Right cardiac atrium (tissue), 5 donors: ENCODE measurements at regions of chr6 and their contacts with region 1.

Region 1: DNA sequence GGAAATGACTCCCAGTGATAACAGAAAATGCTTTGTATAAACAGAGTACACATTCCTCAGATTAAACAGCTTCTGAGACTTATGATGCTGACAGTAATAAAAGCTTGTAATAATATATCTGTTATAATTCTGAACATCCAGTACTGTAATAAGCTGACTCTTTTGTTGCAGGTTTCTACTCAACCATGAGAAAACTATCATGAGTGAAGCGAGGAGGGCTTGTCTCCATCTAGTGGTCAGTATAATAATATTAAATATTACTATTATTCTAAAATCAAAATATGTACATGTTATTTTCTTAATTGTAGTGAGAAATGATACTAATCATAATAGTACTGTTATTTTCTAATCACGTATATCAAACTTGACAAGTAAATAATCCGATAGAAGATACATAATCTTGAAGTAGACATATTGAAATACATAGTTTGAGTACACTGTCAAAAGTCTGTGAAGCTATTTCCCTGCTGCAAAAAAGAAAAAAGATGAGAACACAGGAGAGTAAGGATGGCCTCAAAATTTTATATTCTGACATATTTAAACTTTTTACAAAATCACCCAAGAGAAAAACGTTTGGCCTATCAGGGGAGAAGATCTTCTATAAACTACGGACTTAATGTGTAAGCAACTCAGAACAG is 183.1 kb downstream of the MOXD1 start:
- DNase-seq: no peak
- ATAC-seq: peak; percentile 59 to 80
- H3K4me3 ChIP-seq: no peak overlapping the region
- H3K27ac ChIP-seq: no peak overlapping the region
- H3K4me1 ChIP-seq: no peaks in the 10 kb centered on the region
- H3K27me3 ChIP-seq: no peaks in the 10 kb centered on the region

Region 2: GRCh38 chr6:131914967-131915751 is 303.0 kb before region 1 on chr6:
- intact Hi-C with region 1: loop called (anchors 5 to 10 kb)
- DNase-seq: peak in 2 of 3 donors; percentile 54 to 75
- ATAC-seq: peak; percentile 66 to 76
- H3K4me3 ChIP-seq: no peak overlapping the region
- H3K27ac ChIP-seq: no peak overlapping the region
- H3K4me1 ChIP-seq: no peaks in the 10 kb centered on the region
- H3K27me3 ChIP-seq: no peaks in the 10 kb centered on the region

Region 3: DNA sequence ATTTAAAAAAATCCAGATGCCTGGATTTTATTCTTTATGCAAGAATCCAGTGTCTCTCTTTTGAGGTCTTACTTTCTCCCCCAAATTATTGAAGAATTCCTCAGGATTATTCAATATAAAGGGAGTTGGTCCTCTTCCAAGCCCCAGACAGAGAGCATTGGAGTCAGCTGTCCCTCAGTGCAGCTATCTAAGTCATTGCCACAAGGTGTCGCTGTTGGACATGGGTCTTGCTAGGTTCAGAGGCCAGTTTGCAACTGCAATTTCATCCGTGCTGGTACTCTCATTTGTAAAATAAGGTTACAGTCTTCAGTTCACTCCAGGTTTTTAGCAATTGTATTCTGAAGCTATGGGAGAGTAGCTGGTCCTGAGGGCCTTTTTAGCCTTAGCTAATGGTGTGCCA is 294.8 kb before region 1 on chr6:
- intact Hi-C with region 1: loop called (anchors 5 to 10 kb)
- DNase-seq: peak in 2 of 3 donors; percentile 22 to 69
- ATAC-seq: peak; percentile 45 to 54
- H3K4me3 ChIP-seq: no peak overlapping the region
- H3K27ac ChIP-seq: no peak overlapping the region
- H3K4me1 ChIP-seq: no peaks in the 10 kb centered on the region
- H3K27me3 ChIP-seq: no peaks in the 10 kb centered on the region

Region 4: GRCh38 chr6:132153221-132153898 is 64.8 kb before region 1 on chr6:
- intact Hi-C with region 1: no loop called
- DNase-seq: no peak
- ATAC-seq: no peak
- H3K4me3 ChIP-seq: no peak overlapping the region
- H3K27ac ChIP-seq: no peak overlapping the region
- H3K4me1 ChIP-seq: no peaks in the 10 kb centered on the region
- H3K27me3 ChIP-seq: no peaks in the 10 kb centered on the region